CD8-positive, alpha-beta T cell (primary cell): ENCODE measurements at regions of chr18 and their contacts with region 1.

Region 1: DNA sequence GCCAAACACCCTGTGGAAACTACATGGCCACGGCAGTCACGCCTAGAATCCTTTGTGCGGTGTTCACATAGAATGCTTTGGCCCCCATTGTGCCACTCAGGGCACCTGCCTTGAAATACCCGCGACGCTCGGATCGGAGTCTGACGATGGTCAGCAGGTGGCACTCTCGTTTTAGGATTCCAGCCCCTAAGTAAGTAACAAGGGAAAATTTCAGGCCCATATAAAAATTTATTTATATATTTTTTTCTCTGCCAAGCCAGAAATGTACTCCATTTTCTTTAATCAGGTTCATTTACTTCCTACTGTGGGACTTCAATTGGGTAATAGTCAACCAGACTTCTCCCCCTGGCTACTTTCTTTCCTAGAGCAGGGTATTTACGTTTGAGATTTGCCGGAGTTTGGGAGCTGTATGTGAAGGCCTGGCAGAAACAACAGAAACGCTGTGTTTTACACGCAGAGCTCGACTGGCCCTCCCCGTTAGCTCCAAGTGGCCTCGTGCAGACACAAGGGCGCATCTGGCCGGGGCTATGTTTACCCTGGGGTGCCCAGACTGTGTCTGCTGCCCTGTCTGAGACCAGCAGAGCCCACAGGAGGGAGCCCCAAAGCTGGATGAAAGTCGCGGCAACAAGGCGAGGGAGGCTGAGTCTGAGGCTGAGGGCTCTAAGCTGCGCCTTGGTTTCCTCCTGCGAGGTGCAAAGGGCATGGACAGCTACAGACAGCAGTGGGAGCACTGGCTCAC is 41.6 kb downstream of the LRRC30 start:
- DNase-seq: no peak
- ATAC-seq: no peak
- H3K4me3 ChIP-seq: no peak overlapping the region
- H3K4me3 Mint-ChIP-seq: no peak overlapping the region
- H3K27ac ChIP-seq: no peak overlapping the region
- H3K27ac Mint-ChIP-seq: no peak overlapping the region
- H3K4me1 ChIP-seq: no peaks in the 10 kb centered on the region
- H3K4me1 Mint-ChIP-seq: no peaks in the 10 kb centered on the region
- H3K27me3 ChIP-seq: no peaks in the 10 kb centered on the region
- H3K27me3 Mint-ChIP-seq: peaks cover 2% of the 10 kb centered on the region
- CTCF ChIP-seq: no peak

Region 2: GRCh38 chr18:7221424-7222155 is 50.9 kb before region 1 on chr18:
- CTCF ChIA-PET with region 1: no interaction called
- POLR2A ChIA-PET with region 1: no interaction called
- intact Hi-C with region 1: loop called in 1 of 2 experiments (anchors 10 kb)
- DNase-seq: no peak
- ATAC-seq: no peak
- H3K4me3 ChIP-seq: no peak overlapping the region
- H3K4me3 Mint-ChIP-seq: no peak overlapping the region
- H3K27ac ChIP-seq: no peak overlapping the region
- H3K27ac Mint-ChIP-seq: no peak overlapping the region
- H3K4me1 ChIP-seq: no peaks in the 10 kb centered on the region
- H3K4me1 Mint-ChIP-seq: no peaks in the 10 kb centered on the region
- H3K27me3 ChIP-seq: no peaks in the 10 kb centered on the region
- H3K27me3 Mint-ChIP-seq: no peaks in the 10 kb centered on the region
- CTCF ChIP-seq: no peak